H1 (cell line): ENCODE measurements at regions of chr4 and their contacts with region 1.

Region 1: GRCh38 chr4:81351654-81352445 is 119.9 kb downstream of the RASGEF1B start:
- DNase-seq: peak; percentile 58 to 87
- H3K4me3 ChIP-seq: no peak overlapping the region
- H3K27ac ChIP-seq: no peak overlapping the region
- H3K4me1 ChIP-seq: no peaks in the 10 kb centered on the region
- H3K27me3 ChIP-seq: no peaks in the 10 kb centered on the region; a peak in 1 of 7 replicates
- CTCF ChIP-seq: peak; percentile 48 to 87 (median 86)
- EP300 ChIP-seq: no peak
- POLR2A ChIP-seq: no peak
- RAD21 ChIP-seq: peak; percentile 87 to 90

Region 2: DNA sequence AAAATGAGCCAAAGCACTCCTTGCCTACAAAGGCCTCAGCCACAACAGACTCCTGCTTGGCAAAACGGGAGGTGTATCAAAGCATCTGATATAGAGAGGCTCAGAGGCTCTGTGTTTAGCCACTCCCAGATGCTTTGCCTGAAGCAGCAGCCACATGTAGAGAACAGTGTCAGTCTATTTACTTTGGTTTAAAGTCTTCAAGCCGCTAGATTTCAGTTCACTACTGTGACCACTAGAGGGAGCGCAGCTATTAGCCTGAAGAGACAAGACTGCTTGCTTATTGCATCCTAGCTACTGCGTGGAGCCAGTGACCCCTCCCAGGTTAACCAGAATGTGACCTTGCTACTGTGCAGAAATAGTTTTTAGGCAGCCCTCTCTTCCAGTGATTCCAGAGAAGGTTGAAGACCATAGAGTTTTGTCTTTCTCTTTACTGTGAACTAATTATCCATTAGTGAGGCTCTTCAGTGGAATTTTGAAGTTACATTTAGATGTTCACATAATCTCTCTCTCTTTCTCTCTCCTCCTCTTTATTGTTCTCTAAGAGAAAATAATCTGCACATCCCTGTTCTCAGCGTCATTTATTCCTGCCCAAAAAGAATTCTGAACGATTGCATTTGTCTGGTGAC is 282.0 kb before region 1 on chr4:
- CTCF ChIA-PET with region 1: interaction called, 62 read pairs
- POLR2A ChIA-PET with region 1: no interaction called
- DNase-seq: peak; percentile 66 to 70
- H3K4me3 ChIP-seq: no peak overlapping the region
- H3K27ac ChIP-seq: no peak overlapping the region
- H3K4me1 ChIP-seq: no peaks in the 10 kb centered on the region
- H3K27me3 ChIP-seq: no peaks in the 10 kb centered on the region
- CTCF ChIP-seq: peak; percentile 23 to 94 (median 92)
- EP300 ChIP-seq: no peak
- POLR2A ChIP-seq: no peak
- RAD21 ChIP-seq: peak; percentile 95 to 96

Region 3: DNA sequence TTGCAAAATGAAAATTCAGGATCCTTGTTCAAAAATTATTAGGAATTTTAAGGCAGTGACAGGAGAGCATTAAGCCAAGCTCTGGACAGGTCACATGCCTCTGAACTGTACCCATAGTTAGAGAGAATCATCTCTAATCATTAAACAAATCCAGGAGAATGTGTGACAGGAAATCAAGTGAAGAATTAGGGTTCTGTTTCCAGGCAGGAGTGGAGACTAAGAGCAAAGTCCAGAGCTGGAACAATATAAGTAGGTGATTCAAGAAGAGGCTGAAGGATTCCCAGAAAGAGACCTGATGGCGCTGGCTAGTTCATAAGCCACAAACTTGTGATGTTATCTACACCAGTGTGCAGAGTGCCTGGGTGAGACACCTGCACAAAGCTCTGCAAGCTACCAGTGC is 32.2 kb before region 1 on chr4:
- CTCF ChIA-PET with region 1: interaction called, 13 read pairs
- POLR2A ChIA-PET with region 1: no interaction called
- DNase-seq: no peak
- H3K4me3 ChIP-seq: no peak overlapping the region
- H3K27ac ChIP-seq: no peak overlapping the region
- H3K4me1 ChIP-seq: no peaks in the 10 kb centered on the region
- H3K27me3 ChIP-seq: no peaks in the 10 kb centered on the region
- CTCF ChIP-seq: no peak
- EP300 ChIP-seq: no peak
- POLR2A ChIP-seq: no peak
- RAD21 ChIP-seq: no peak

Region 4: DNA sequence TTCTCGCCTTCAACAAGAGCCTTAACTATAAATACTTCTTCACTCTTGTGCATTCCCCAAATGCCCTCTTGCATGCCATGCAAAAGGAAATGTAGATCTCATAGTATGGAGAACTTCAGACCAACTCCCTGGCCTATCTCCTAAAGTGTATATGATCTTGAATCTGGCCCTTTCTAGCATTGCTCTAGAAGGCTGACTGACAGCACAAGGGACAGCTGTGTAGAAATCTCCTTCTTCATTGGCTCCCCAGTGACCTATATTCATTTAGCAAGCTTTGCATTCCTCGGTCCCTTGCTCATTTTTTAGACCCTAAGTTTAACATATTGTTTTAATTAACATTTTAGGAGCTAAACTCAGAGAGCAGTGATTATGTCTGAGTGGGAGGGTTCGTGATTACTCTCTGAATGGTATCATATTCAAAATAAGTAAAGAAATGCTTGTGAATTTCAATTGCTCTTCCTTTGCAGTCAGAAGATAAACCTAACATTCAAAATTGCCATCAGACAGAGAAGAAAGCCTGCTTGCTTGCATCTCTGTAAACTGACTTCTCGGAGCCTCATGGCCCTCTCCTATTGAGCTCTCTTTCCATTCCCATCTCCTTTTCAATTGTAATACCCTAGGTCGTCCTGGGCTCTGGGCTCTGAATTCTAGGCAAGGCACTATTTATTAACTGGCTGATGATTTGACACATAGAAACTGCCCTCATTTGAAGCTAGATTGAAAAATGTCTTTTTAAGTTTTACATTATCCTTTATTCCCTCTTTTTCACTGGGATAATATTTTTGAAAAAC is 16.5 kb before region 1 on chr4:
- CTCF ChIA-PET with region 1: interaction called, 31 read pairs
- POLR2A ChIA-PET with region 1: no interaction called
- DNase-seq: no peak
- H3K4me3 ChIP-seq: no peak overlapping the region
- H3K27ac ChIP-seq: no peak overlapping the region
- H3K4me1 ChIP-seq: no peaks in the 10 kb centered on the region
- H3K27me3 ChIP-seq: no peaks in the 10 kb centered on the region
- CTCF ChIP-seq: no peak
- EP300 ChIP-seq: no peak
- POLR2A ChIP-seq: no peak
- RAD21 ChIP-seq: no peak